Prostate gland (tissue), 2 donors: ENCODE measurements at regions of chr3 and their contacts with region 1.

Region 1: DNA sequence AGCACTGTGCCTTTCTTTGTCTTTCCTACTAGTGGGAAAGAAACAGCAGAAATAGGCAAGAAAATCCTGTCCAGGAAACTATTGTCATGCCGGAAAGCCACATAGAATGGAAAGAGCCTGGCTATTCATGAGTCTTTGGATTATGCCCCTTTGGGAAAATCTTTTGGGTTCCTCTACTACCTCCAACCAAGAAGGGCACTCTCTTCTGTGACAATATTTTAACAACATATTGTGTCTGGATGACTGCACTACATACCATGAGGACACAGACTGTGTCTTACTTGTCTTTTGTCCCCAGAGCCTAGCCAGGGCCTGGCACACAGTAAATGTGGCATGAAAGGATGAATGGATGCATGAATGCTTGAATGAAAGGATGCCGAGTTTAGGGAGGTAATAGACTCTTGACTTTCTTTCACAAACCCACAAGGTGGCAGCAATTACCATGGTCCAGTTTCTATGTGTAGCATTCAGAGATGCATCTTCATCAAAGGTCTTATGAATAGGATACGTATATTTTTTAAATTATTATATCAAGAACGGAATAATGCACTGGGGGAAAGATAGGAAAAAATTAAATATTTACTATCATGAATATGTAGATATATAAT is 30.3 kb downstream of the ARL14 start:
- DNase-seq: peak; percentile 43
- H3K4me3 ChIP-seq: no peak overlapping the region
- H3K27ac ChIP-seq: no peak overlapping the region
- H3K4me1 ChIP-seq: no peaks in the 10 kb centered on the region
- H3K27me3 ChIP-seq: no peaks in the 10 kb centered on the region
- CTCF ChIP-seq: peak in 3 of 4 experiments; percentile 60 to 74 (median 68)
- POLR2A ChIP-seq: no peak

Region 2: DNA sequence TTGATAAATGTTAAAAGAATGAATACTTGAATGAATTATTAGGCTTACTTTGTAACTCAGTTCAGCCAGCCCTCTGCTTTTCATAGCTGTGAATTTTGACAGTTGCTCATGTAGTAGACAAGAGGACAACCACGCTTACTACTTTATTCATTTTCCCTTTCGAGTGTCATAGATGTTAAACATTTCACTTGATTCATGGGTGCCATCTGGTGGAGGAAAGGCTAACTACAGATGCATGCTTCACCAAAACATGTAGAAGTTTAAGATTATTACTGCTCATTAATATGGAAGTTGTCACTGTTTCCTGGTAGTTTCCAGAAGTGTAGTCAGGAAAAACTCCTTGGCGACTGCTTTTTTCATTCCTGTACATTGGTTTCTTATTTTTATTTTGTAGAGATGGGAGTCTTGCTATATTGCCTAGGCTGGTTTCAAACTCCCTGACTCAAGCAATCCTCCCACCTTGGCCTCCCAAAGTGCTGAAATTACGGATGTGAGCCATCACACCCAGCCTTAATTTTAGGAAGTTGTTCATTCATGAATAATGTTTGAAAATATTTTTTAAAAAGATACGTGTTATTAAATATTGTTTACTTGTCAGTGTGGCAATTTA is 234.7 kb after region 1 on chr3:
- intact Hi-C with region 1: loop called (anchors 2 kb)
- DNase-seq: peak; percentile 69
- H3K4me3 ChIP-seq: no peak overlapping the region
- H3K27ac ChIP-seq: no peak overlapping the region
- H3K4me1 ChIP-seq: no peaks in the 10 kb centered on the region
- H3K27me3 ChIP-seq: no peaks in the 10 kb centered on the region
- CTCF ChIP-seq: peak; percentile 69 to 91 (median 84)
- POLR2A ChIP-seq: no peak

Region 3: DNA sequence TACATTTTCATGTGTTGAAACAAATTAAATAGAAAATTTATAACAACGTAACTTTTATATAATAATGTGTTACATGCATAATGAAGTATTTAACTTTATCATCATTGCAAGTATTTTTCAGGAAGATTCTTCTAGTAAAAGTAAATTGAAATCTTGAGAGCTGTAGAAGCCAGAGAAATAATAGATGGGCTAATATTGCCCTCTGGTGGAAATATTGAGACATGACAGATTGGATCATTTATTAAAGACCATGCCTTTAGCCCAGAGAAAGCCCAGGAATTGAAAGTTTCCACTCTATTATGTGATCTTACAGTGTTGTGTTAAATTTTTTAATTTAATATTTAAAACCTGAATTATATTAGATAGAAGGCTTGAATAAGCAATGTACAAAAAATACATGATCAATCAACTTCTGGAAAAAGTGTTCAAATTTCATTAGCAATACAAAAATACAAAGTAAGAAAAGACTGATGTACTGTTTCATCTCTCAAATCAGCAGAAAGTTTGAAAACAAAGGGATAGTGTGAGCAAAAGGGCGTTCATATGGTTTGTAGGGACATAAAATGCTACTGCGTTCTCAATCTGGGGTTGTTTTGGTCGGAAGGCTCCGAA is 716.7 kb after region 1 on chr3:
- intact Hi-C with region 1: loop called (anchors 10 kb)
- DNase-seq: no peak
- H3K4me3 ChIP-seq: no peak overlapping the region
- H3K27ac ChIP-seq: no peak overlapping the region
- H3K4me1 ChIP-seq: no peaks in the 10 kb centered on the region
- H3K27me3 ChIP-seq: no peaks in the 10 kb centered on the region
- CTCF ChIP-seq: peak; percentile 54 to 90 (median 85)
- POLR2A ChIP-seq: no peak